ENCODE measurements at regions of chr10 and their contacts with region 1.

Region 1: GRCh38 chr10:18073314-18073713 is 66.9 kb upstream of the CACNB2 start:
- DNase-seq: no peak
- ATAC-seq: peak in 2 of 8 donors; percentile 24 to 69
- H3K4me3 ChIP-seq: no peak overlapping the region
- H3K27ac ChIP-seq: no peak overlapping the region
- H3K4me1 ChIP-seq: peaks cover 0 to 8% (median 0%) of the 10 kb centered on the region in 9 donors
- H3K27me3 ChIP-seq: no peaks in the 10 kb centered on the region
- CTCF ChIP-seq: no peak

Region 2: DNA sequence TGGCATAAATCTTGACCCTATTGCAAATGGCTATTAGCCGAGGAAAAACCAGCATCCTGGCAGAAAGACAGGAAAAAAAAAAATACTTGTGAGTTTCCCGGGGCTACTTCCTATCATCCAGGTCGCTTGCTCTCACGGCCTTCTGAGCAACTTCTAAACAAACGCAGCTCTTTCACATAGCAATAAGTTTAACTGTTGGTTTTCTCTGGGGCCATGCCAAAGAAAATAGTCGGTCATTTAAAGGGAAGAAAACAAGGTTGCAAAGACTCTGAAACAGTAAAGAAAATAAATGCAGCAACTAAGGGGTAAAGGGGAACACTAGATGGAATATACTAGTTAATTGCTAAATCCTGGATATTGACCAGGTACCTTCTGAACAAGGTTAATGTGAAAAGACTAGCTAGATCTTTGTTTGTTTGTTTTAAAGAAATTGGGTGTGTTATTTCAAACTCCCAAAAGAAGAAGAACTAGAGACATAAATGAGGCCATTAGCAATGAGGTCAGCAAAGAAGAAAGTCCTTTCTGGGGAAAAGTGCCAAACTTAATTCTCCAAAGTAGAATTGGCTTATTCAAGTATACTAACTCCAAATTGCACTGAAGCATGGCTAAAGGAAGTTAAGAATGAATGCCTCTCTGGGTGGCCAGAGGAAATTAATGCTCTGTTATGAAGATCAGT is 67.4 kb before region 1 on chr10:
- intact Hi-C with region 1: loop called in 1 of 10 experiments (anchors 1 kb)
- DNase-seq: peak in 1 of 2 donors; percentile 26
- ATAC-seq: peak in 4 of 8 donors; percentile 28 to 65 (median 52)
- H3K4me3 ChIP-seq: peak overlapping the region in 3 of 10 donors; percentile 6 to 17 (median 15)
- H3K27ac ChIP-seq: peak overlapping the region in 8 of 10 donors; percentile 5 to 53 (median 25)
- H3K4me1 ChIP-seq: peaks cover 0 to 24% (median 0%) of the 10 kb centered on the region in 9 donors
- H3K27me3 ChIP-seq: no peaks in the 10 kb centered on the region
- CTCF ChIP-seq: no peak

Measured in heart right ventricle (tissue), 16 donors.